ENCODE measurements at regions of chr7 and their contacts with region 1.

Region 1: GRCh38 chr7:132337450-132338080 is 238.7 kb downstream of the PLXNA4 start:
- DNase-seq: no peak
- CTCF ChIP-seq: no peak

Region 2: DNA sequence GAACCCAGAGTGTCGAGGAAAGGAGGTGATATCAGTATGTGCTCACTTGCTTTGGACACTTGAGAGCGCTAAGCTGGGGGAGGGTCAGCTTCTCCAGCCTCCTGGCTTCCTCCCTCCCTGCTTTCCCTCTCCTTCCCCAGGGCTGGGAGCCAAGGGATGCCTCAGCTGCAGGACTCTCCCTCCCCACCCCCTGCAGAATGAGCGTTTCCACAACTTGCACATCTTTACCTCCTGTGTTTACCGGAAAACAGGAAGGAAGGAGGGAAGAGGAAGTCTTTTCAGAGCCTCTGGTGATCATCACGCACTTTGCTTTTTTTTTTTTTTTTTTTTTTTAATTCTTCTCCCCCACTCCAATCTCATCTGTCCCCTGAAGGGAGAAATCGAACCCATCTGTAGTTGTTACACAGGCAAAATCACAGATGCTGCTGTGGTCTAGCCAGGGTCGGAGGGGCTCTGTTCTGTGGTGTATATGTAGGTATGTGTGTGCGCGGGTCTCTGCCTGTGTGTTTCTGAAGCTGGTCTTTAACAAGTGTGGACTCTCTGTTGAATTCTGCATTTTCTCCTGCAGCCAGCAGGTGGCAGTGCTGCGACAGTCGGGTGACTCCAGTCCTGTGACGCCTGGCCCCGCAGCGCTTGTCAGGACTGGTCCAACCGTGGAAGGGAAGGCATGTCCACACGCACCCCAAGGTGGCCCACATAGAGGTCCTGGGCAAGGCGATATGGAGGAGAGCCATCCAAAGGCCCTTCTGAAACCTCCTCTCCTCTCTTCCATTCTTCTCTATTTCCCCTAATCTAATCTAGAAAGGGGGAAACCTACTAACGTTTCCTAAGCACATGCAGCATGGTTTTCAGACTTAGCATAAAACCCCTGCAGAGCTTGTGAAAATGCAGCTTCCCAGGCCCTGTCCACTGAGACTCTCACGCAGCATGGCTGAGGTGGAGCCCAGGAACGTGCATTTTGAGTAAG is 18.9 kb before region 1 on chr7:
- CTCF ChIA-PET with region 1: interaction called, 13 read pairs
- POLR2A ChIA-PET with region 1: no interaction called
- DNase-seq: peak; percentile 83
- CTCF ChIP-seq: peak; percentile 96

Region 3: GRCh38 chr7:132355048-132355447 is 17.5 kb after region 1 on chr7:
- CTCF ChIA-PET with region 1: no interaction called
- POLR2A ChIA-PET with region 1: no interaction called
- DNase-seq: no peak
- CTCF ChIP-seq: no peak

Measured in GM10248 (cell line).